H1 (cell line): ENCODE measurements at regions of chr4 and their contacts with region 1.

Region 1: DNA sequence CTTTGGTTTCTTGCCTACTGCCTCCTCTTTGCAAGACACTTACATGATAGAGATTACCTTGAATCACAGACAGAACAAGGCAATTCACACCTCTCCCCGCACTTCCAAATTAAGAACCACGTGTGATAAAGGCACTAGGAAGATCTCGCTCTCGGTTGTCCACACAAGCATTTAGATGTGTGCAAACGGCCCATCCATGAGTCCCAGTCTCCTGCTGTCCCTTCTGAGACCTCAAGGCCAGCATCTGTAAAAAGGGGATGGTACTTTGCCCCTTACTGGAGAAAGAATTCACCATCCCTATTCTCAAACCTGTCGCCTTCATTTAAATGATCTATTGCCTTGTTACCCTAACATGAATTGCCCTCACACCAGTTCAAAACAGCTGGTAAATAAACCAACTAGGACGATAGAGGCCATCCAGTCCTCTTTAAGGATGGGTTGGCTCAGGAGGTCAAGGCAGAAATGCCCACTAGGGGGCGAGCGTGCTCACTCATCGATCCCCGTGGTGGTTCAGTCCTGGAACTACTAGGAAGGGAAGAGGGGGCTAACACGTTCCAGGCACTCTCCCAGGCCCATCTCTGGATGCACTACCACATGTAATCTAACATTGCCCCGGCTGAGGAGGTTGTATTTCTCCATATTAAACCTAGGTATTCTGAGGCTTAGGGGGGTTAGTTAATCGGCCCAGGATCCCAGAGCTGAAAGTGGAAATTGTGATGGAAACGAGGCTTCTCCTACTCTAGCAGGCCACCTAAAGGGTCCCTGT is 95.8 kb downstream of the DHX15 start:
- DNase-seq: peak in 1 of 2 experiments; percentile 98
- H3K4me3 ChIP-seq: no peak overlapping the region
- H3K27ac ChIP-seq: no peak overlapping the region
- H3K4me1 ChIP-seq: peaks cover 0 to 3% (median 0%) of the 10 kb centered on the region in 4 experiments; a peak in 3 of 7 replicates
- H3K27me3 ChIP-seq: peaks cover 0 to 1% (median 0%) of the 10 kb centered on the region in 4 experiments; a peak in 1 of 7 replicates
- CTCF ChIP-seq: peak; percentile 86 to 97 (median 96)
- EP300 ChIP-seq: no peak
- POLR2A ChIP-seq: no peak
- RAD21 ChIP-seq: peak; percentile 89 to 91

Region 2: DNA sequence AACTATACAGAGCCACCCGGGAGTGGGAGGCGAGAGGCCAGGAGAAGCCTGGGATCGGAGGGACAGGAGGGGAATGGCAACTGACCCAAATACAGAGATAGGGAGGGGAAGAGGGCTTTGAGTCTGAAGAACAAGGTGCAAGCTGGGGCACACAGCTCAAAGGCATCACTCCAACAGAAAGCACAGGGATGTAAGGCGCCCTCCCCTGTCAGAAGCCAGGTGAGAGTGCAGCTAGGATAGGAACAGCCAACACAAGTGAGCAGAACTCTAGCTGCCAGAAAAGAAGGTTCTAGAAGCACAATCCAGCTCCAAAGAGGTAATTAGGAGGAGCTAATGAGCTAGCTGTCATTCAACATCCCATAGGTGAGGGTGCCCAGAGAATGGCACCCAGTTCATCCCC is 136.5 kb before region 1 on chr4:
- CTCF ChIA-PET with region 1: no interaction called
- POLR2A ChIA-PET with region 1: no interaction called
- DNase-seq: no peak
- H3K4me3 ChIP-seq: no peak overlapping the region
- H3K27ac ChIP-seq: no peak overlapping the region
- H3K4me1 ChIP-seq: peaks cover 0 to 4% (median 2%) of the 10 kb centered on the region in 4 experiments; a peak in 1 of 7 replicates
- H3K27me3 ChIP-seq: peaks cover 0 to 5% (median 1%) of the 10 kb centered on the region in 4 experiments; a peak in 2 of 7 replicates
- CTCF ChIP-seq: no peak
- EP300 ChIP-seq: no peak
- POLR2A ChIP-seq: no peak
- RAD21 ChIP-seq: peak in 1 of 2 experiments; percentile 24; a peak in 1 of 4 replicates

Region 3: DNA sequence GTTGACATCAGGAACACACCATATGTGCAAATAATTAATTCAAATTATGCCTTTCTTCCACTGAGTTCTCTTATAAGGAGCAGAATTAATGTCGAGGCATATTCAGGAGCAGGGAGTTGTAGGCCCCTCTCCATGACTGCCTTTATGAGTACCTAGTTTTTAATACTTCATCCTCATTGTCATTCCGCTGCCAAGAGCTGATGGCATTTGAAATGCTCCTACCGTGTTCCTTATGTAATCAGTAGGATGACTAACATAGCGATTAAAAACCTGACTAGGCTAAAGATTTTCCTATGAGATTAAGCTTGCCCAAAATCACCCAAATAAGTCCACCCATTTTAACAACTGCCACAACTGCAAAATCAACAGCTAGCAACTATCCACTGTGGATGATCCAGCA is 124.8 kb before region 1 on chr4:
- CTCF ChIA-PET with region 1: no interaction called
- POLR2A ChIA-PET with region 1: no interaction called
- DNase-seq: no peak
- H3K4me3 ChIP-seq: no peak overlapping the region
- H3K27ac ChIP-seq: no peak overlapping the region
- H3K4me1 ChIP-seq: no peaks in the 10 kb centered on the region
- H3K27me3 ChIP-seq: peaks cover 0 to 2% (median 0%) of the 10 kb centered on the region in 4 experiments; a peak in 3 of 7 replicates
- CTCF ChIP-seq: no peak
- EP300 ChIP-seq: no peak
- POLR2A ChIP-seq: no peak
- RAD21 ChIP-seq: no peak

Region 4: GRCh38 chr4:24507439-24507838 is 18.9 kb after region 1 on chr4:
- CTCF ChIA-PET with region 1: interaction called, 35 read pairs
- POLR2A ChIA-PET with region 1: interaction called, 21 read pairs
- DNase-seq: no peak
- H3K4me3 ChIP-seq: no peak overlapping the region
- H3K27ac ChIP-seq: no peak overlapping the region; the same call in 1 of the 2 replicates
- H3K4me1 ChIP-seq: peaks cover 15 to 28% (median 22%) of the 10 kb centered on the region in 4 experiments
- H3K27me3 ChIP-seq: no peaks in the 10 kb centered on the region
- CTCF ChIP-seq: no peak
- EP300 ChIP-seq: no peak
- POLR2A ChIP-seq: no peak
- RAD21 ChIP-seq: no peak